Left cardiac atrium (tissue), 4 donors: ENCODE measurements at regions of chr14 and their contacts with region 1.

Region 1: GRCh38 chr14:61252369-61253063 is 28.6 kb downstream of the TMEM30B start:
- DNase-seq: peak; percentile 71
- ATAC-seq: peak; percentile 97

Region 2: GRCh38 chr14:60349663-60350365 is 902.7 kb before region 1 on chr14:
- intact Hi-C with region 1: loop called (anchors 5 to 10 kb)
- DNase-seq: no peak
- ATAC-seq: peak; percentile 55 to 63

Region 3: GRCh38 chr14:60622917-60623257 is 629.6 kb before region 1 on chr14:
- intact Hi-C with region 1: loop called (anchors 2 to 5 kb)
- DNase-seq: no peak
- ATAC-seq: peak in 1 of 2 donors; percentile 75

Region 4: DNA sequence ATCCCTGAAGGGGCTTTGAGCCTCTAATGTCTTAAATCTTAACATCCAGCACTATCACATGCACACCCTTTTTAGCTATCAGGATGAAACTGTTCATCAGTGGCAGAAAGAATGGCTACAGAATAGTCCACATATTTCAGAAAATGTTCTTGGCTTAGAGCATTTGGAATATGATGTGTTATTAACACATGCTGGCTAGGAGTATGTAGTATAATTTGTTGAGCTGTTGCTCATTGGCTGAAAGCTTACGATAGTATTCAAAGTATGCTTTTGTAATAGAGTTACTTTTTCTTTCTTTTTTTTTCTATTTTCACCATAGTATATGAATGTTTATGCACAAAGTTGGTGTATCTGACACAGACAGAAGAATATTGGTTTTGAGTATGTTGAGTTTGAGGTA is 462.9 kb before region 1 on chr14:
- intact Hi-C with region 1: no loop called
- DNase-seq: no peak
- ATAC-seq: no peak

Region 5: GRCh38 chr14:61025251-61026223 is 227.0 kb before region 1 on chr14:
- intact Hi-C with region 1: loop called in 1 of 2 experiments (anchors 2 kb)
- DNase-seq: peak; percentile 40
- ATAC-seq: peak; percentile 49 to 59

Region 6: GRCh38 chr14:61269321-61270083 is 17.0 kb after region 1 on chr14:
- intact Hi-C with region 1: no loop called
- DNase-seq: peak; percentile 77
- ATAC-seq: peak; percentile 80 to 83